ENCODE measurements at regions of chr7 and their contacts with region 1.

Region 1: GRCh38 chr7:108497082-108497725 is 28.7 kb downstream of the PNPLA8 start:
- DNase-seq: peak; percentile 60
- H3K4me3 Mint-ChIP-seq: no peak overlapping the region
- H3K27ac Mint-ChIP-seq: no peak overlapping the region
- H3K4me1 Mint-ChIP-seq: no peaks in the 10 kb centered on the region
- H3K27me3 Mint-ChIP-seq: no peaks in the 10 kb centered on the region

Region 2: DNA sequence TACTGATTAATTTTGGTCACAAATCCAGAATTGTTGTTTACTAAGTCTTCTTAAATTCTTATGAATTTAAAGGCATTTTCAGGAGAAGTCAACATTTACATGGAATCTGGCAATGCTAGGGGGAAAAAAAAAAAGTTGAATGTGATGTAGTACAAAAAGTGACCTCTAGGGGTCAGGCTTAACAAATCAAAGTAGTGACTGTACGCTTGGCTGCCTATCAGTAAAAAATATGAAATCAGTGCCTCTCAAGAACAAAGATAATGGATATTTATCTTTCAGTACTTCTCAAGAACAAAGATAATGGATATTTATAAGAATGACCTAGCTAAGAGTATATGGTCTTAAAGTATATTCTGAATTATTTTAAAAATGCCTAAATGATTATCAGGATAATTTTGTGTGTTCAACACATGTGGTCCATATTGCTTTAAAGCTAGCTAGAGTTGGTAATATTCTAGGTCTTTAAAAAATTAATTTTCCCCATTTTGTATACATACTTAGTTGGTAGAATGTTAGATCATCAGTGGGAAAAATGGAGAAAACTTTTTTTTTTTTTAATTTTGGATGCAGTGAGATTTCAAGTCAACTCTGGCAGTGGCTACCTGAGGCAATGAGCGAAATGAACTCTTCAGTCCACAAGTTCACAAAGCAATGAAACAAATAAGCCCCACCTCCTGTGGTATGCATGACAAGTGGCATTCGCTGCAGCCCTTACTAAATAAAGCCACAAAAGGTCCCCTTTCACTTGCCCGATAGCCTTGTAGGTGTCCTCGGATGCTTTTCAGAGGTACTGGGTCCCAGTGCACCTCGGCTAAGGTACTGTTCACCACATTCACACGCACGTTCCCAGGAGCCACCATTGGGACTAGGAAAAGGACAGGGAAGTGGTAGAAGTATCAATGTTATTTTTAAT is 315.9 kb before region 1 on chr7:
- CTCF ChIA-PET with region 1: interaction called, 16 read pairs
- DNase-seq: no peak
- H3K4me3 Mint-ChIP-seq: no peak overlapping the region
- H3K27ac Mint-ChIP-seq: no peak overlapping the region
- H3K4me1 Mint-ChIP-seq: no peaks in the 10 kb centered on the region
- H3K27me3 Mint-ChIP-seq: peaks cover 4% of the 10 kb centered on the region

Region 3: GRCh38 chr7:108402865-108403264 is 94.3 kb before region 1 on chr7:
- CTCF ChIA-PET with region 1: no interaction called
- DNase-seq: no peak
- H3K4me3 Mint-ChIP-seq: no peak overlapping the region
- H3K27ac Mint-ChIP-seq: no peak overlapping the region
- H3K4me1 Mint-ChIP-seq: no peaks in the 10 kb centered on the region
- H3K27me3 Mint-ChIP-seq: peaks cover 3% of the 10 kb centered on the region

Region 4: DNA sequence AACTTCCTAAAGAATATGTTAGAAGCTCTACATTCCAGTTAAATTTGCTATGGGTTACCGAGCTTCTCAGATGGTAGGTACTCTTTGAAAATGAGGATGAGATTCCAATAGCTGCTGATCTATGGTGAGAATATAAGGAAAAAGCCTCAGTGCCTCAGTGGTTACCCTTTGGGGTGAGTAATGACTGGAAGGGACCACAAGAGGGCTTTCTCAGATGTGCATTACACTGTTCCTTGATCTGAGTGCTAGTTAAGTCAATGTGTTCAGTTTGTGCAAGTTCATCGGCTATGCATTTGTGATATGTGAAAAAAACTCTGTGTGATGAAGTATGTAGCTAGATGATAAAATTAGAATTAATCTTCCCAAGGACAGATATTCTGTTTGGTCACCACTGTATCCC is 44.5 kb before region 1 on chr7:
- CTCF ChIA-PET with region 1: interaction called, 13 read pairs
- DNase-seq: no peak
- H3K4me3 Mint-ChIP-seq: no peak overlapping the region
- H3K27ac Mint-ChIP-seq: no peak overlapping the region
- H3K4me1 Mint-ChIP-seq: peaks cover 12% of the 10 kb centered on the region
- H3K27me3 Mint-ChIP-seq: peaks cover 59% of the 10 kb centered on the region